ENCODE measurements at regions of chr18 and their contacts with region 1.

Region 1: DNA sequence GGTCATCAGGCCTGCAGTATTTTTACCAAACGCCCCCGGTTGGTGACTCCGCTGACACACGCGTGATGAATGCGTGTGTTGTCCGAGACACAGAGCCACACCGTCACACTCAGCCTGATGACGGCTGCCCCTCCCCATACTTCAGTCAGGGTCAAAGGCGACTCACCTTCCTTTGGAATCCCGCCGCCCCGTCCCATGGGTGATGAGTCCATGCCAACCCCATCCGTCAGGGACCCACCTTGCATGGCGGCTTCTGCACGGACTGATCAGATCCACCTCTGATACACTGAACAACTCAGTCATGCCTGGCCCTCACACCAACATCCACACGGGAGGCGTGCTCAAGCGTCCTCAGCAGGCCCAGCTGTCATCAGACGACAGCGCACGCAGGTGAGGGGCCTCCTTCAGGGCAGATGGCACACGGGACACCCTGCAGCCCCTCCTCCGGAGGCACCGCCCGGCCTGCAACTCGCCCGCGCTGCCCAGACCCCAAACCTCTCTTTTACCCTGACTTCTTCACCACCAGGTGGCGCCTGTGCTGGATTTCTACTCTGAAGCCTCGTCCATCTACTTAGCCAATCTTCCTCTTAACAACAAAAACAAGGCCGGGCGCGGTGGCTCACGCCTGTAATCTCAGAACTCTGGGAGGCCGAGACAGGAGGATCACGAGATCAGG is 89.2 kb downstream of the ZNF516 start:
- DNase-seq: peak; percentile 63 to 73
- H3K4me3 ChIP-seq: no peak overlapping the region
- H3K27ac ChIP-seq: no peak overlapping the region
- H3K4me1 ChIP-seq: peaks cover 0 to 41% (median 19%) of the 10 kb centered on the region in 4 donors
- H3K27me3 ChIP-seq: no peaks in the 10 kb centered on the region
- CTCF ChIP-seq: peak in 5 of 7 experiments; percentile 21 to 54 (median 47)
- EP300 ChIP-seq: no peak
- POLR2A ChIP-seq: no peak

Region 2: DNA sequence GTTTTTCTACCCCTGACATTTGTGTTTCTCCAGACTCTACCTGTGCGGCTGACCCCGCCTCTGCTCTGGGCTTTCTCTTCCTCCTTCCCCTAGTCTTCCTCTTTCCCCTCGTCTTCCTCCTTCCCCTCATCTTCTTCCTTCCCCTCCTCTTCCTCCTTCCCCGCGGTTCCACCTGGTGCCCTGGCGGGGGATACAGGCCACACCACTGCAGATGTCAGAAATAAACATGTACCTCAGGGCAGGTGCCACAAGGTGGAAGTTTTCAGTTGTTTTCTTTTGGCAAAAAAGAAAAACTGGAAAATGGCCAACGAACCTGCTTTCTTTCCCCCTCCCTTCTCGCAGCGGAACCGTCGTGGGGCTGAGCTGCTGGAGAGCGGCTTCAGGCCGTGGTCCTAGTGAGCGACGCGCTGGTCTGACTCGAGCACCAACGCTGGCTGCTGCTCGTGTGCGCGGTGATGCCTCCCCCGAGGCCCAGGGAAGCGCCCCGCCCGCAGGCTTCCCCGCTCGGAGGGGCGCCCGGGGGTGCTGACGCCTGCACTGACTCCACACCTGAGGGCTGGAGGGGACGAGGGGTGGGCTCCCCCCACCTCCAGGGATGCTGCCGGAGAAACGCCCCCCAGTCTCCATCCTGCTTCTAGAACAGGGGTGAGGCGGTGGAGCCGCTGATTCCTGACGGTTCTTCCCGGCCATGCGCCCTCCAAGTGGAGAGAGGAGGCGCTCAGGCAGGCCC is 172.9 kb after region 1 on chr18:
- intact Hi-C with region 1: no loop called
- DNase-seq: peak in 1 of 2 donors; percentile 52
- H3K4me3 ChIP-seq: no peak overlapping the region
- H3K27ac ChIP-seq: no peak overlapping the region
- H3K4me1 ChIP-seq: peaks cover 0 to 10% (median 5%) of the 10 kb centered on the region in 4 donors
- H3K27me3 ChIP-seq: peaks cover 0 to 21% (median 11%) of the 10 kb centered on the region in 3 donors
- CTCF ChIP-seq: no peak
- EP300 ChIP-seq: no peak
- POLR2A ChIP-seq: no peak

Region 3: DNA sequence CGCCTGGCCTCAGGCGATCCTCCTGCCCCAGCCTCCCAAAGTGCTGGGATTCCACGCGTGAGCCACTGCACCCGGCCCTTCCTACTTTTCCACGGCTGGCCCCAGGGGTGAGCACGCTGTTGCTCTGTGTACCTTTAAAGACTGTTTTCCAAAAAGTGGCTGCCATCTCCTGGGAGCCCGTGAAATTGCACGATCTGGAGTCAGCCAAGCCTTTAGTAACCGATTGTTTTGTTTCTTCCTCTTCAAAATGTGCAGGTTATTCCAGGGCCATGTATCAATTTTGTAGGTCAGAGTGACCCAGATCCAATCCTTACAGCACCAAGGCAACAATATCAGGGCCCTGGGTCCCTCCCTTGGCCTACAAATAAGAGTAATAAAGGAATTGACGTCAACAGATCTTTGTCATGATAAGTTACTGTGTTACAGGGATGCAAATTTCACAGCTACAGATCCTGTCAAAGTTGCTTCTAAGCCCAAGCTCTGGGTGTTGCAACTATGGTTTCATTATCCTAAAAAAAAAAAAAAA is 281.0 kb after region 1 on chr18:
- intact Hi-C with region 1: loop called (anchors 10 kb)
- DNase-seq: peak; percentile 68 to 87
- H3K4me3 ChIP-seq: no peak overlapping the region
- H3K27ac ChIP-seq: peak overlapping the region in 3 of 5 donors; percentile 37 to 62 (median 48)
- H3K4me1 ChIP-seq: peaks cover 0 to 12% (median 9%) of the 10 kb centered on the region in 4 donors
- H3K27me3 ChIP-seq: peaks cover 0 to 35% (median 0%) of the 10 kb centered on the region in 3 donors
- CTCF ChIP-seq: peak in 5 of 7 experiments; percentile 45 to 65 (median 59)
- EP300 ChIP-seq: no peak
- POLR2A ChIP-seq: no peak

Region 4: GRCh38 chr18:76709659-76710645 is 304.1 kb after region 1 on chr18:
- intact Hi-C with region 1: loop called (anchors 5 kb)
- DNase-seq: peak; percentile 74 to 87
- H3K4me3 ChIP-seq: no peak overlapping the region
- H3K27ac ChIP-seq: no peak overlapping the region
- H3K4me1 ChIP-seq: peaks cover 0 to 6% (median 4%) of the 10 kb centered on the region in 4 donors
- H3K27me3 ChIP-seq: no peaks in the 10 kb centered on the region
- CTCF ChIP-seq: peak in 6 of 7 experiments; percentile 22 to 92 (median 84)
- EP300 ChIP-seq: no peak
- POLR2A ChIP-seq: no peak

Measured in stomach (tissue), 19 donors.